Activated CD4-positive, alpha-beta T cell treated with anti-CD3 and anti-CD28 coated beads, Interleukin-2, amount 10 ng/mL, durations not matched to agents 7 days and 5 days (primary cell): ENCODE measurements at regions of chr9 and their contacts with region 1.

Region 1: GRCh38 chr9:132240753-132241493 is 79.1 kb downstream of the NTNG2 start:
- DNase-seq: peak; percentile 99
- H3K4me3 Mint-ChIP-seq: peak overlapping the region; percentile 98
- H3K27ac Mint-ChIP-seq: peak overlapping the region; percentile 99
- H3K4me1 Mint-ChIP-seq: peaks cover 22% of the 10 kb centered on the region
- H3K27me3 Mint-ChIP-seq: peaks cover 6% of the 10 kb centered on the region

Region 2: DNA sequence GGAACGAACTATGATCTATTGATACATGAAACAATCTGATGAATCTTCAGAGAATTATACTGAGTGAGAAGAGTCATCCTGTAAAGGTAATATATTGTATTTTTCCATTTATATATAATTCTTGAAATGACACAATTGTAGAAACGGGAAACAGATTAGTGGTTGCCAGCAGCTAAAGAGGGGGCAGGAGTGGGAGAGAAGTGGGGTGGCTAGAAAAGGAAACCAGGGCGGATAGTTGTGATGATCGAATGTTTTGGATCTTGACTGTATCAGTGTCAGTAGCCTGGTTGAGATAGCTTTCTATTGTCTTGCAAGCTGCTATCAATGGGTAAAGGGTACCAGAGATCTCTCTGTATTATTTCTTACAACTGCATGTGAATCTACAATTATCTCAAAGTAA is 483.4 kb before region 1 on chr9:
- CTCF ChIA-PET with region 1: interaction called, 13 read pairs
- POLR2A ChIA-PET with region 1: no interaction called
- DNase-seq: no peak
- H3K4me3 Mint-ChIP-seq: no peak overlapping the region
- H3K27ac Mint-ChIP-seq: no peak overlapping the region
- H3K4me1 Mint-ChIP-seq: peaks cover 6% of the 10 kb centered on the region
- H3K27me3 Mint-ChIP-seq: peaks cover 15% of the 10 kb centered on the region

Region 3: GRCh38 chr9:132169672-132170392 is 71.1 kb before region 1 on chr9:
- CTCF ChIA-PET with region 1: interaction called, 16 read pairs
- POLR2A ChIA-PET with region 1: no interaction called
- DNase-seq: peak; percentile 55
- H3K4me3 Mint-ChIP-seq: no peak overlapping the region
- H3K27ac Mint-ChIP-seq: no peak overlapping the region
- H3K4me1 Mint-ChIP-seq: no peaks in the 10 kb centered on the region
- H3K27me3 Mint-ChIP-seq: peaks cover 28% of the 10 kb centered on the region

Region 4: DNA sequence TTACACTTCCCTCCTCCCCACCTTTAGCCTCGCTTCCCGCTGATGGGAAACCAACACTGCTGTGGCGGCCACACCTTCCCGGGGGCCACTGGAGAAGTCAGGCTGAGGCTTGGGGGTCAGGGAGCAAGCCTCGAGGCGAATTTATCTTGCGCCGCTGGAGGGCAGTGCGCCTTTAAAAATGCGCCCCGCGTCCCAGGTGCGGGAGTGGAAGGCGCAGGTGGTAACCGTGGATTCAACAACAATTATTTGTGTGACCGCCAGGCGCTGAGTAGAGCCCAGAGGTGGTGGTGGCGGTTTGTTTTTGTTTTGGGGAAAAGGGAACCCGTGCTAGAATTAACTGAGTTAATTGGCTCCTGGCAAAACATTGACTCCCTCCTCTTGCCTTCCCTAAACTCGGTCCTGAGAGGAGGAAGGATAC is 170.2 kb after region 1 on chr9:
- CTCF ChIA-PET with region 1: no interaction called
- POLR2A ChIA-PET with region 1: no interaction called
- DNase-seq: peak; percentile 78
- H3K4me3 Mint-ChIP-seq: peak overlapping the region; percentile 58
- H3K27ac Mint-ChIP-seq: no peak overlapping the region
- H3K4me1 Mint-ChIP-seq: peaks cover 29% of the 10 kb centered on the region
- H3K27me3 Mint-ChIP-seq: peaks cover 61% of the 10 kb centered on the region